ENCODE measurements at regions of chr3 and their contacts with region 1.

Region 1: GRCh38 chr3:129249276-129250065 is at the start of gene COPG1:
- DNase-seq: peak; percentile 91
- H3K4me3 ChIP-seq: peak within 1 kb of the TSS; percentile 92 to 98 (median 94)
- H3K27ac ChIP-seq: peak within 1 kb of the TSS; percentile 86 to 94 (median 93)
- H3K4me1 ChIP-seq: peaks cover 19 to 37% (median 26%) of the 10 kb centered on the region in 4 donors
- H3K27me3 ChIP-seq: no peaks in the 10 kb centered on the region
- CTCF ChIP-seq: no peak
- EP300 ChIP-seq: no peak
- POLR2A ChIP-seq: peak; percentile 97
- total RNA-seq, gene COPG1: 64.7 to 149 (median 116) TPM

Region 2: GRCh38 chr3:128178782-128179483 is 1070.5 kb before region 1 on chr3:
- in situ Hi-C with region 1: no loop called
- intact Hi-C with region 1: no loop called
- DNase-seq: no peak
- H3K4me3 ChIP-seq: no peak overlapping the region
- H3K27ac ChIP-seq: no peak overlapping the region
- H3K4me1 ChIP-seq: peaks cover 0 to 10% (median 0%) of the 10 kb centered on the region in 4 donors
- H3K27me3 ChIP-seq: no peaks in the 10 kb centered on the region
- CTCF ChIP-seq: no peak
- EP300 ChIP-seq: no peak
- POLR2A ChIP-seq: no peak

Region 3: DNA sequence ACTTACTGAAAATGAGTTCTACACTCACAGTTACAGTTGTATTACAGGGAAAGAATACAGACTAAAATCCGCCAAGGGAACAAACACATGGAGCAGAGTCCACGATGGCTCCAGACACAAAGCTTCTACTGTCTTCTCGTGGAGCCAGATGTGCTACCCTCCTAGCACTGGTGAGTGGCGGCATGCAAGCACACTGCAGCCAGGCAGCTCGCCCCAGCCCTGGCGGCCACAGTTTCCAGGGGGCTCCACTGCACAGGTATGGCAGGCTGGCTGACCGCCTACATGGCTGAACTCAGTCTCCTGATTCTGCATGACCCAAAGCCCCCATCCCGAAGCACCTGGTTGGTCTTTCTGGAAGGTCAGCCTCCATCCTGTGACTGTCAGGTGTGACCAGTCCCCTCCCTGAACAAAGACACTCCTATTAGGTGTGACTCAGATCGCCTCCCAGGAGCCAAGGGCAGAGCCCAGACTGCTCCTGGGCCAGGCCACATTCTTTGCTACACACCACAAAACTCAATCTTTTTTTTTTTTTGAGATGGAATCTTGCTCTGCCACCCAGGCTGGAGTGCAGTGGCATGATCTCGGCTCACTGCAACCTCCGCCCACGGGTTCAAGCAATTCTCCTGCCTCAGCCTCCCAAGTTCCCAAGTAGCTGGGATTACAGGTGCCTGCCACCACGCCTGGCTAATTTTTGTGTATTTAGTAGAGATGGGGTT is 307.2 kb before region 1 on chr3:
- in situ Hi-C with region 1: no loop called
- intact Hi-C with region 1: no loop called
- DNase-seq: no peak
- H3K4me3 ChIP-seq: no peak overlapping the region
- H3K27ac ChIP-seq: no peak overlapping the region
- H3K4me1 ChIP-seq: no peaks in the 10 kb centered on the region
- H3K27me3 ChIP-seq: no peaks in the 10 kb centered on the region
- CTCF ChIP-seq: no peak
- EP300 ChIP-seq: no peak
- POLR2A ChIP-seq: no peak

Region 4: DNA sequence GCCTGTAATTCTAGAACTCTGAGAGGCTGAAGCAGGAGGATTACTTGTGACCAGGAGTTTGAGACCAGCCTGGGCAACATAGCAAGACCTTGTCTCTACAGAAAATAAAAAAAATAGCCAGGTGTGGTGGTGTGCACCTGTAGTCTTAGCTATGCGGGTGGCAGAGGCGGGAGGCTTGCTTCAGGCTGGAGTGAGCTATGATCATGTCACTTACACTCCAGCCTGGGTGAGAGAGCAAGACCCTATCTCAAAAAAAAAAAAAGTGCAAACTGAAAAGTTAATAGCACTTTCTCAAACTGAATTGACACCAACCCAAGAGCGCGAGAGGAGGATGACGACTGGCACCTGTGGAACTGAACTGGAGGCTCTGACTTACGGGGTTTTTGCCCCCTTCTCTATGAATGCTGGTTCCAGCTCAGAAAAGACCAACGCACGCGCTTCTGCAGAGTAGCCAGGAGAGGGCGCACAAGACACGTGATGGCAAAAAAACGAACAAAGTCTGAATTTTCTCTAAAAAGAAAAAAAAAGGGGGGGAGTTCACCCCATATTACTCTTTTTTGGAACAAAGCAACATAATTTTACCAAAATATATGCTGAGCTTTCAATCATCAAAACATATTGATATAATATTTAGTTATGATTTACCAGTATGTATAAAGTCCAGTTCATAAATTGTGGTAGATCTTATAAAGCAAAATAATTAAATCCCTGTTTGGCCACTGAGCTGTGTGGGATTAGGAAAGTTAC is 279.3 kb before region 1 on chr3:
- in situ Hi-C with region 1: loop called in 2 of 4 experiments (anchors 10 kb)
- intact Hi-C with region 1: no loop called
- DNase-seq: peak; percentile 35
- H3K4me3 ChIP-seq: no peak overlapping the region
- H3K27ac ChIP-seq: no peak overlapping the region
- H3K4me1 ChIP-seq: peaks cover 0 to 19% (median 0%) of the 10 kb centered on the region in 4 donors
- H3K27me3 ChIP-seq: no peaks in the 10 kb centered on the region
- CTCF ChIP-seq: peak; percentile 87 to 94 (median 92)
- EP300 ChIP-seq: no peak
- POLR2A ChIP-seq: no peak

Region 5: DNA sequence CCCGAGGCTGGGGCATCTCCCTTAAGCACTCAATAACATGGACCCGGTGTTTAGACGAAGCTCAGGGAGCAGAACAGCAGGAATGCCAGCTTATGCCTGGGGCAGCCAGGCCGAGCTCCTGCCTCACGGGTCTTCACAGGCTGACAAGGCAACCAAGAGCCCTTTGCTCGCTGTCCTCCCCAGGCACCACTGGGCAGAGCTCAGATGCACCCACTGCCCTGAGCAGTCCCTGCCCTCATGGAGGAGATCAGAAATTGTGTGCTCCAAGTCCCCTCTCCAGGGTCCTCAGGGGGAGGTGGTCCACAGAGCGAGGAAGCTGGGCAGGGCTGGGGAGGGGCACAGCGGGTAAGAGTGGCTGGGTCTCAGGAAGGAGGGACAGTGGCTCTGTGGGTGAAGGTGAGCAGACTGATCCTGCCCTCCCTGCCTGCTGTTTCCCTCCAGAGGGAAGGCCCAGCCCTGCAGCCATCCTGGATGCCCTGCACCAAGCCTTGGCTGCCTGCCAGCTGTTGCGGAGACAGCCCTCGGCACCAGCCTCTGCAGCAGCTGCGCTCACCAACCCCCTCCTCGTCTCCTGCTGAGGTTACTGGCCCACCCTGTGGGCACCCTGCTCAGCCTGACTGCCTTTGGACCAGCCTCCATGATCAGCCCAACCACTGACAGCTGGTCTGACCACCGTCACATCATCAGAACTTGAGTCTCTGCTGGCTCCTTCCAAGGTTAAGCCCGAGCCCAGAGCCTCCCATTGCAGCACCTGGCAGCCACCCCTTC is 210.0 kb before region 1 on chr3:
- in situ Hi-C with region 1: loop called in 1 of 4 experiments (anchors 10 kb)
- intact Hi-C with region 1: no loop called
- DNase-seq: peak; percentile 60
- H3K4me3 ChIP-seq: no peak overlapping the region
- H3K27ac ChIP-seq: no peak overlapping the region
- H3K4me1 ChIP-seq: no peaks in the 10 kb centered on the region
- H3K27me3 ChIP-seq: peaks cover 6% of the 10 kb centered on the region
- CTCF ChIP-seq: no peak
- EP300 ChIP-seq: no peak
- POLR2A ChIP-seq: no peak

Region 6: DNA sequence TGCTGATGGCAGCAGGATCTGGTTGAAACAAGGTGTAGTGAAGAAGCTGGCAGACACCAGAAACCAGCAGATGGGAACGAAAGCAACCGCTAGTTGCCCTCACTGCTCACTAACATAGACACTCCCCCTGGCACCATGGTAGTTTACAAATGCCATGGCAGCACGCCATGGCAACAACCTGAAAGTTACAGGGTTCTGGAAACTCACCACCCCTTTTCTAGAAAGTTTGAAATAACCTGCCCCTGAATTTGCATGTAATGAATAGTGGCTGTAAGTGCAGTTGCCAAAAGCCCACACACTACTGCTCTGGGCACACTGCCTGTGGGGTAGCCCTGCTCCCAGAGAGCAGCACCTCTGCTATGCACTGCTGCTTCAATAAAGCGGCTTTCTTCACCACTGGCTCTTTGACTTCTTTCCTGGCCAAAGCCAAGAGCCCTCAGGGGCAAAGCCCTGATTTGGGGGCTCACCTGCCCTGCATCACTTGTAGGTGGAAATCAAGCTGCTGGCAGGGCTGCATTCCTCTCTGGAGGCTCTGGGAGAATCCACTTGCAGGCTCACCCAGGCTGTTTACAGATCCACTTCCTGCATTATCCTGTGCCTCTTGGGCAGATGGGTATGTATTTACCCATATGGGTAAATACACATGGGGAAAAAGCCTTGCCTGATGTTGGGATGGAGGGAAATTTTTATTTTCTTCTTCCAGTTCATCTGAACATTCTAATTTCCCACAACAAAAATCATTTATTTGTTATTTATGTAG is 190.8 kb before region 1 on chr3:
- in situ Hi-C with region 1: loop called in 1 of 4 experiments (anchors 10 kb)
- intact Hi-C with region 1: loop called (anchors 10 kb)
- DNase-seq: peak; percentile 73
- H3K4me3 ChIP-seq: no peak overlapping the region
- H3K27ac ChIP-seq: peak overlapping the region; percentile 54 to 86 (median 76)
- H3K4me1 ChIP-seq: peaks cover 15 to 69% (median 46%) of the 10 kb centered on the region in 4 donors
- H3K27me3 ChIP-seq: no peaks in the 10 kb centered on the region
- CTCF ChIP-seq: no peak
- EP300 ChIP-seq: no peak
- POLR2A ChIP-seq: no peak

Region 7: GRCh38 chr3:129166579-129167332 is 82.7 kb before region 1 on chr3:
- in situ Hi-C with region 1: loop called in 1 of 4 experiments (anchors 5 kb)
- intact Hi-C with region 1: no loop called
- DNase-seq: no peak
- H3K4me3 ChIP-seq: no peak overlapping the region
- H3K27ac ChIP-seq: no peak overlapping the region
- H3K4me1 ChIP-seq: peaks cover 5 to 16% (median 10%) of the 10 kb centered on the region in 4 donors
- H3K27me3 ChIP-seq: no peaks in the 10 kb centered on the region
- CTCF ChIP-seq: no peak
- EP300 ChIP-seq: no peak
- POLR2A ChIP-seq: no peak